Right cardiac atrium (tissue), 5 donors: ENCODE measurements at regions of chr11 and their contacts with region 1.

Region 1: GRCh38 chr11:73236854-73237253 is 18.8 kb downstream of the P2RY2 start:
- DNase-seq: peak; percentile 52 to 80 (median 72)
- ATAC-seq: peak; percentile 8 to 16
- H3K4me3 ChIP-seq: no peak overlapping the region
- H3K27ac ChIP-seq: peak overlapping the region; percentile 5
- H3K4me1 ChIP-seq: peaks cover 14% of the 10 kb centered on the region
- H3K27me3 ChIP-seq: no peaks in the 10 kb centered on the region

Region 2: GRCh38 chr11:72831513-72832300 is 405.1 kb before region 1 on chr11:
- intact Hi-C with region 1: loop called (anchors 5 to 10 kb)
- DNase-seq: peak; percentile 87 to 95 (median 94)
- ATAC-seq: peak; percentile 77 to 79
- H3K4me3 ChIP-seq: no peak overlapping the region
- H3K27ac ChIP-seq: peak overlapping the region; percentile 44
- H3K4me1 ChIP-seq: peaks cover 33% of the 10 kb centered on the region
- H3K27me3 ChIP-seq: no peaks in the 10 kb centered on the region